ENCODE measurements at regions of chr7 and their contacts with region 1.

Region 1: GRCh38 chr7:107168233-107169119 is at the start of gene HBP1:
- DNase-seq: peak; percentile 99
- H3K4me3 Mint-ChIP-seq: peak within 1 kb of the TSS; percentile 96
- H3K27ac Mint-ChIP-seq: peak within 1 kb of the TSS; percentile 97
- H3K4me1 Mint-ChIP-seq: peaks cover 32% of the 10 kb centered on the region
- H3K27me3 Mint-ChIP-seq: peaks cover 2% of the 10 kb centered on the region
- total RNA-seq, gene HBP1: 24.3 to 26.7 TPM

Region 2: DNA sequence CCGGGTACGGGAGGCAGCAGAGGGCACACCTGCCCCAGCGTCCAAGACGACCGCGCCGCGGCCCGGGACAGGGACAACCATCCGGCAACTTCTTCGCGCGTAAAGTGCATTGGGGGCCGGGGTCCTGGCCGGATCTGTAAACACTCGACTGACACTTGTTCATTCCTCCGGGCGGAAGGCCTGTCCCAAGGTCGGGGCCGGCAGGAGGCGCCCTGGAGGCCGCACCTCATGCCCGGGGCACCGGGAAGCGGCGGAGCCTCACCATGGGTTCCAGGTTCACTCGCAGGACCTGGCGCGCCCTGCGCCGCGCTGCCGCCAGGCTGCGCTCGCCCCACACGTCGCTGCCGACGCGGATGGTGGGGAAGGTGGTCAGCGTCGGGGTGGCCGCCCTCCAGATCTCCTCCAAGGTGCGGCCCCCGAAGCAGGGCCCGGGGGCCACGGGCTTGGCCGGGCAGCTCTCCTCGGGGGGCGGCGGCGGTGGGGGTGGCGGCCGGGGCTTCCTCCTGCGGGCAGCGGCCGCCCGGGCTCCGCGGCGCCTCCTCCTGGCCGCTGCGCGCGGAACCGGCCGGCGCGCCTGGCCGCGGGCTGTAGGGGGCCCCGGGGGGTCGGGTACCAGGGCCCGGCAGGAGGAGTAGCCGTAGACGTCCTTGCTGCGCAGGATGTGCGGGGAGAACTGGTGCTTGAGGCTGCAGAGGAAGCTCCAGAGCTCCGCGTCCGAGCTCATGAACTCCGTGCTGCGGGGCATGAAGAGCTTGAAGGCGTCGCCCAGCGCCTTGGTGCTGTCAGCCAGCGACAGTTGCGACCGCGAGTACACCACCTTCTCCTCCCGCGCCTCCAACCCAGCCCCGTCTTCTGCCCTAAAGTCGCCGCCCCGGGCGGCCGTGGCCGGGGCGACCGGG is 508.3 kb before region 1 on chr7:
- CTCF ChIA-PET with region 1: interaction called, 3 read pairs
- POLR2A ChIA-PET with region 1: no interaction called
- intact Hi-C with region 1: loop called (anchors 2 kb)
- DNase-seq: peak; percentile 91
- H3K4me3 Mint-ChIP-seq: peak overlapping the region; percentile 87
- H3K27ac Mint-ChIP-seq: peak overlapping the region; percentile 83
- H3K4me1 Mint-ChIP-seq: peaks cover 28% of the 10 kb centered on the region
- H3K27me3 Mint-ChIP-seq: no peaks in the 10 kb centered on the region

Region 3: DNA sequence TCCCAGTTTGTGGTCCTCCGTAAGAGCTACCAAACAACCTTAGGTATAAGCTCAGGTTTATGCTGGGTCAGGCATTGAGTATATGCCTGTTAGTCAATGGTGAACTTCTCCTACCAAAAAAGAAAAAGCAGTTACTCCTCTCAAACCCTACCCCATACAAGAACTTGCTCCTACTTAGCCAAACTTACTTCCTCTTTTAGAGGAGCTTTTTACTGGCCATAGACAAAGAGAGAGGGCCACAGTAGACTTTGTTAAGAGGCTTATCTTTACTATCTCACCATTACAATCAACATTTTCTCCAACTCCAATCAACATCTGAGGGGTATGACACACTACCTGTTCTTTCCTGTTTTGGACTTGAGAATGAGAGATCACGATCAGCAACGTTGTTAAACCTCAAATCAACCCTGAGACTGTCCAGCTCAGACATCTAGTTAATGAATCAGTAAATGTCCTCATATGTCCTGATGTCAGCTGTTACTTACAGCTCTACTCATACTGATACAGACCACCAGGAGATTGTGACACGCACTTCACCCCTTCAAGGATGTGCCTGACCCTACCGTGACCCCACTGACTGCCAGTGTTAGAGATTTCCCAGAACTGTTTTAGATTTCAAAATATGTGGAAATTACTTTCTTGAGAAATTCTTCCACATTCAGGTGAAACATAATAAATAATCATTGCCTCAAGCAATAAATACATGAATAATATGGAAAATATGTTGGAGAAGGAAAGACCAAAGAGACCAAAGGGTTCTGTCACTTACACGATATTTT is 489.1 kb before region 1 on chr7:
- CTCF ChIA-PET with region 1: no interaction called
- POLR2A ChIA-PET with region 1: no interaction called
- intact Hi-C with region 1: no loop called
- DNase-seq: peak; percentile 52
- H3K4me3 Mint-ChIP-seq: no peak overlapping the region
- H3K27ac Mint-ChIP-seq: peak overlapping the region; percentile 72
- H3K4me1 Mint-ChIP-seq: peaks cover 13% of the 10 kb centered on the region
- H3K27me3 Mint-ChIP-seq: no peaks in the 10 kb centered on the region

Region 4: GRCh38 chr7:106865130-106866041 is 303.1 kb before region 1 on chr7 and contains the start of gene PIK3CG:
- CTCF ChIA-PET with region 1: no interaction called
- POLR2A ChIA-PET with region 1: interaction called, 3 read pairs
- intact Hi-C with region 1: loop called (anchors 1 kb)
- DNase-seq: no peak
- H3K4me3 Mint-ChIP-seq: peak within 1 kb of the TSS; percentile 83
- H3K27ac Mint-ChIP-seq: peak within 1 kb of the TSS; percentile 79
- H3K4me1 Mint-ChIP-seq: peaks cover 73% of the 10 kb centered on the region
- H3K27me3 Mint-ChIP-seq: no peaks in the 10 kb centered on the region
- total RNA-seq, gene PIK3CG: 10.9 to 11.3 TPM

Region 5: DNA sequence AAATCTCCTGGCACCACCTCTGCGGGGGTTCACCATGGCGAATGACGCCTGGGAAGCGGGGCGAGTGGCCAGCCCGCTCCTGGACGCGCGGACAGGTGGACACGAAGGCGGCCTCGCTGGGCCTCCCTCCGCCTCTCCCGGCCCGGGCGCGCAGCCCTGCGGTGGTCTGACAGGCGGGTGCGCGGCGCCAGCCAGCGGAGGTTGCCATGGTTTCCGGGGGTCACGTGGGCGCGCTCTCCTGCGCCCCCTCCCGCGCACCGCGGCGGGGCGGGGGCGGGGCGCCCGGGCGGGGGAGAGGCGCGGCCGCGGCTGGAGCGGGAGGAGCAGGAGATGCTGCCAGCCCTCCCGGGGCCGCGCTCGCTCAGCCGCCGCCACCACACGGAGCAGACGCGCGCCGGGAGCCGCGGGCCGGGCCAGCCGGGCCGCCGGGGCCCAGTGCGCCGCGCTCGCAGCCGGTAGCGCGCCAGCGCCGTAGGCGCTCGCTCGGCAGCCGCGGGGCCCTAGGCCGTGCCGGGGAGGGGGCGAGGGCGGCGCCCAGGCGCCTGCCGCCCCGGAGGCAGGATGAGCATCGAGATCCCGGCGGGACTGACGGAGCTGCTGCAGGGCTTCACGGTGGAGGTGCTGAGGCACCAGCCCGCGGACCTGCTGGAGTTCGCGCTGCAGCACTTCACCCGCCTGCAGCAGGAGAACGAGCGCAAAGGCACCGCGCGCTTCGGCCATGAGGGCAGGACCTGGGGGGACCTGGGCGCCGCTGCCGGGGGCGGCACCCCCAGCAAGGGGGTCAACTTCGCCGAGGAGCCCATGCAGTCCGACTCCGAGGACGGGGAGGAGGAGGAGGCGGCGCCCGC is 123.9 kb before region 1 on chr7 and contains the start of gene PRKAR2B:
- CTCF ChIA-PET with region 1: no interaction called
- POLR2A ChIA-PET with region 1: no interaction called
- intact Hi-C with region 1: no loop called
- DNase-seq: peak; percentile 73
- H3K4me3 Mint-ChIP-seq: peak within 1 kb of the TSS; percentile 72
- H3K27ac Mint-ChIP-seq: no peak within 1 kb of the TSS
- H3K4me1 Mint-ChIP-seq: peaks cover 18% of the 10 kb centered on the region
- H3K27me3 Mint-ChIP-seq: peaks cover 39% of the 10 kb centered on the region
- total RNA-seq, gene PRKAR2B: 1.3 to 1.4 TPM

Region 6: GRCh38 chr7:107180378-107180777 is 11.9 kb after region 1 on chr7:
- CTCF ChIA-PET with region 1: interaction called, 6 read pairs
- POLR2A ChIA-PET with region 1: interaction called, 24 read pairs
- intact Hi-C with region 1: loop called (anchors 1 kb)
- DNase-seq: peak; percentile 82
- H3K4me3 Mint-ChIP-seq: no peak overlapping the region
- H3K27ac Mint-ChIP-seq: peak overlapping the region; percentile 85
- H3K4me1 Mint-ChIP-seq: peaks cover 46% of the 10 kb centered on the region
- H3K27me3 Mint-ChIP-seq: no peaks in the 10 kb centered on the region

Region 7: DNA sequence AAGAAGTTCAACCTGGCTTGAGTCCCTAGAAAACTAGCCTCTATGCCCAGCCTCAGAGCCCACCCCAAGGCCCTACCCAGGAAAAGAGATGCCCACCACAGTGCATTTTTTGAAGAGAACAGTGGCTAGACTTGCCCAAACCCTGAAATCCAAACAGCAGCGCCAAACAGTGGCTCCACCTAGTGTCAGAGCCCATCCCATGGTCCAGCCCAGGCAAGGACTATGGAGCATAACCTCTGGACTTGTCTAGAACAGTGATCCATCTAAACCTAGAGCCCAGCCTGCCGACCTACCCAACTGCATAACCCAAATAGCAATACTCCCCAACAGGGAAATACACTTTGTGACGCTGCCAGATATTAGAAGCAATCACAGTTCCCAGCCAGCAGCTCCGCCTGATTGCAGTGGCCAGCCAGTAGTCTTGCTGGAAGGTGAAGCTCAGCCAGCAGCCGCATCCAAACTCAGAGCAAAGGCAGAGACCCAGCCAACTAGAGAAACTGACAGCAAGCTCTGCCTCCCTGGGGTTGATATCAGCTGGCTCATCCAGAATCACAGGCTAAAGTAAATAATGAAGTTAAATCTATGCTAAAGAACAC is 44.8 kb after region 1 on chr7:
- CTCF ChIA-PET with region 1: no interaction called
- POLR2A ChIA-PET with region 1: no interaction called
- intact Hi-C with region 1: no loop called
- DNase-seq: no peak
- H3K4me3 Mint-ChIP-seq: no peak overlapping the region
- H3K27ac Mint-ChIP-seq: no peak overlapping the region
- H3K4me1 Mint-ChIP-seq: peaks cover 7% of the 10 kb centered on the region
- H3K27me3 Mint-ChIP-seq: no peaks in the 10 kb centered on the region

Region 8: DNA sequence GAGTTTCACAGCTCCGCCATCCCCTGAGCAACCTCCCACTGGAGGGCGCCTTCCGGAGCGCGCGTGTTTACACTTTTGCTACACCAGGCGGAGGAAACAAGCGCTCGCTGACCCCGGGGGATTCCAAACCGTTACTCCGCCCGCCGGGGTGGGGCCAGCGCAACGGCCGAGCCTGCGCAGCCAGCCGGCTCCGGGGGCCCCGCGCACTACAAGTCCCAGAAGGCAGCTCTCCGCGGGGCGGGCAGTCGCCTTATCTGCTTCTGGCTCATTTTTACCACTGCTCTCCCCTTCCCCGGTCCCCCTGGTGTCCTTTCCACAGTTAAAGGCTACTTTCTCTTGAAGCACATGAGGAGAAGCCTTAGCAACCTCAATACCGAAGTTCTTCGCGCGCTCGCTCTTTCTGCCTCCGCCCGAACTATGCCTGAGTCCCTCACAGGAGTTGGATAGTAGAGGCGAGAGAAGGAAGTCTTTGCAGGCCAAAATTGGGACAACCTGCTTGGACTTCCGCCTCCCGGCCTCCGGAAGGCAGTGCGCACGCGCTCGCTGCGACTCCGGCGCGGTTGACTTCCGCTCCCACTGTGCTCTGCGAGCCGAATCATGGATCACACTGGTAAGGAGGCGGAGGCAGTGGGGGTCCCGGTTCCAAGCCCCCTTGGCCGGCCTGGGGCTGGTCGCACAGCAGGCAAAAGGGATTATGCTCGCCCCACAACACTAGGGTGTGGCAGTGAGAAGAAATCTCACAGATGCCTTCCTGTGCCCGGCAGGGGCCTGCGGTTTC is 575.3 kb after region 1 on chr7 and contains the start of gene CBLL1:
- CTCF ChIA-PET with region 1: interaction called, 7 read pairs
- POLR2A ChIA-PET with region 1: interaction called, 15 read pairs
- intact Hi-C with region 1: loop called (anchors 1 kb)
- DNase-seq: peak; percentile 99
- H3K4me3 Mint-ChIP-seq: peak within 1 kb of the TSS; percentile 97
- H3K27ac Mint-ChIP-seq: peak within 1 kb of the TSS; percentile 100
- H3K4me1 Mint-ChIP-seq: peaks cover 49% of the 10 kb centered on the region
- H3K27me3 Mint-ChIP-seq: no peaks in the 10 kb centered on the region
- total RNA-seq, gene CBLL1: 38.7 to 40.4 TPM

Region 9: DNA sequence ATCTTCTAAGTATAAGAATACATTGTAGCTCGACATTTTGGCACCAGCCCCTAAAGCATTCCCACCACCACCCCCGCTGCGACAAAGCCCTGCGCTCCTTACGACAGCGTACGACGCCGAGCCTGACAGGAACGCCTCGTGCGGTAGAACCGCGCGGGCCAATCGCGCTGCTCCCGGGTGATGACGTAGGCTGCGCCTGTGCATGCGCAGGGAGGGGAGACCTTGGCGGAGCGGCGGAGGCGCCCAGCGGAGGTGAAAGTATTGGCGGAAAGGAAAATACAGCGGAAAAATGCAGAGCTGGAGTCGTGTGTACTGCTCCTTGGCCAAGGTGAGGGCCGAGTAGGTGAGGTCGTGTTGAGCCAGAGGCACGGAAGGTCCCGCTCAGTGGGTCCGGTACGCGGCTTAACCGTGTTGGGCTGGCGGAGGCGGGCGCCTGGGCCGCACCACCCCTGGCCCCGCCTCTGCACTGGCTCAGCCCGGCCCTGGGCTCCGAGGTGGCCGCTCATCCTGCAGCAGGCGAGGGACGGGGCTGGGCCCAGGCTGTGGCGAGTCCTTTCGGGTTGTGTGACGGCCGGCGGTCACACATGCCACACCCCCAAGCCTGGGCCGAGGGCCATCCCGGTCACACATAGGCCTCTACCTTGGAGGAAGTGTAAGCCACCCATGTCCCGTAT is 722.6 kb after region 1 on chr7 and contains the start of gene DLD:
- CTCF ChIA-PET with region 1: no interaction called
- POLR2A ChIA-PET with region 1: no interaction called
- intact Hi-C with region 1: loop called (anchors 2 kb)
- DNase-seq: peak; percentile 97
- H3K4me3 Mint-ChIP-seq: peak within 1 kb of the TSS; percentile 89
- H3K27ac Mint-ChIP-seq: peak within 1 kb of the TSS; percentile 94
- H3K4me1 Mint-ChIP-seq: peaks cover 36% of the 10 kb centered on the region
- H3K27me3 Mint-ChIP-seq: no peaks in the 10 kb centered on the region
- total RNA-seq, gene DLD: 103 to 116 TPM